ENCODE measurements at regions of chr12 and their contacts with region 1.

Region 1: DNA sequence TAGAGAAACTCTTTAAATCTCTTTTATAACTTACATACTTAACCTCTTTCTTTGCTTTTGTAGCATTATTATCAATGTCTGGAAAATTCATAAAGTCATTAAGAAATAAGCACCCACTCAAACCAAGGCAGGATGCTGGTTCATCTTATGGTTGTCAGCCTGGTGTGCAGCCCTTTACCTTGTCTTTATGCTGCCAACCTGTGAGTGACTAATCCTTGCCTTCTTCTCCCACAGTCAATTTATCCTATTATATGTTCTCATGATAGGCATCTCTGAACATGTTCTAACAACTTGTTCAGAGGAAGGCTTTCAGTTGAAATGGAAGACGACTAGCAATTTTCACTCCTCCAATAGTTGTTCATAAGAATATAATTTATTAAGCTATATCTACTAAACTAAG is 186.9 kb upstream of the CAND1 start:
- DNase-seq: no peak
- H3K4me3 ChIP-seq: no peak overlapping the region
- H3K27ac ChIP-seq: no peak overlapping the region
- H3K4me1 ChIP-seq: peaks cover 26% of the 10 kb centered on the region
- H3K27me3 ChIP-seq: no peaks in the 10 kb centered on the region
- CTCF ChIP-seq: no peak

Region 2: GRCh38 chr12:66755727-66756395 is 326.4 kb before region 1 on chr12:
- CTCF ChIA-PET with region 1: no interaction called
- POLR2A ChIA-PET with region 1: no interaction called
- intact Hi-C with region 1: no loop called
- DNase-seq: no peak
- H3K4me3 ChIP-seq: no peak overlapping the region
- H3K27ac ChIP-seq: no peak overlapping the region
- H3K4me1 ChIP-seq: no peaks in the 10 kb centered on the region
- H3K27me3 ChIP-seq: no peaks in the 10 kb centered on the region
- CTCF ChIP-seq: no peak

Region 3: DNA sequence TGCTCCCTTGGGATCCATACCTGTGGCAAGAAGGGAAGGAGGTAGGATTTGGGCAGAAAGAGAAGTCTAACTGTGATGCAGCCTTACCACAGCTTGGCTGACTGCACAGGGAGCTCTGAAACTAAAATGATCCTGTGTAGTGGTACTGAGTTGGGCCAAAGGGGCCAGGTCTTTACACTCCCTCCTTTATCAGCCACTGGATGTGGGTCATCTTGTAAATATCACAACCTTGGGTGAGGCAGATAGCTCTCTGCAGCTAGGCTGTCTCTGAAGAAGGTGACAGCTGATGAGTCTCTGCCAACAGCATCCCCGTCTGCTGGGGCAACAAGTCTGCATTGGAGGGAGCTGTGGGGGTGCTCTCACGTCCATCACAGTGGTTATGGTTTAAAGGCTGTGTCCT is 91.0 kb after region 1 on chr12:
- CTCF ChIA-PET with region 1: no interaction called
- POLR2A ChIA-PET with region 1: interaction called, 10 read pairs
- intact Hi-C with region 1: no loop called
- DNase-seq: no peak
- H3K4me3 ChIP-seq: no peak overlapping the region
- H3K27ac ChIP-seq: no peak overlapping the region
- H3K4me1 ChIP-seq: no peaks in the 10 kb centered on the region
- H3K27me3 ChIP-seq: peaks cover 26% of the 10 kb centered on the region
- CTCF ChIP-seq: no peak

Measured in PC-9 (cell line).